Calu3 (cell line): ENCODE measurements at regions of chr1 and their contacts with region 1.

Region 1: GRCh38 chr1:225772323-225772768 is 5.3 kb upstream of the SRP9 start:
- DNase-seq: peak; percentile 98
- H3K4me3 Mint-ChIP-seq: peak overlapping the region; percentile 35
- H3K27ac Mint-ChIP-seq: peak overlapping the region; percentile 61
- H3K4me1 Mint-ChIP-seq: peaks cover 63% of the 10 kb centered on the region
- H3K27me3 Mint-ChIP-seq: no peaks in the 10 kb centered on the region
- CTCF ChIP-seq: peak; percentile 85

Region 2: GRCh38 chr1:225480825-225481434 is 291.4 kb before region 1 on chr1:
- CTCF ChIA-PET with region 1: interaction called, 12 read pairs
- intact Hi-C with region 1: loop called (anchors 1 kb)
- DNase-seq: peak; percentile 89
- H3K4me3 Mint-ChIP-seq: no peak overlapping the region
- H3K27ac Mint-ChIP-seq: no peak overlapping the region
- H3K4me1 Mint-ChIP-seq: peaks cover 15% of the 10 kb centered on the region
- H3K27me3 Mint-ChIP-seq: no peaks in the 10 kb centered on the region
- CTCF ChIP-seq: peak; percentile 96

Region 3: DNA sequence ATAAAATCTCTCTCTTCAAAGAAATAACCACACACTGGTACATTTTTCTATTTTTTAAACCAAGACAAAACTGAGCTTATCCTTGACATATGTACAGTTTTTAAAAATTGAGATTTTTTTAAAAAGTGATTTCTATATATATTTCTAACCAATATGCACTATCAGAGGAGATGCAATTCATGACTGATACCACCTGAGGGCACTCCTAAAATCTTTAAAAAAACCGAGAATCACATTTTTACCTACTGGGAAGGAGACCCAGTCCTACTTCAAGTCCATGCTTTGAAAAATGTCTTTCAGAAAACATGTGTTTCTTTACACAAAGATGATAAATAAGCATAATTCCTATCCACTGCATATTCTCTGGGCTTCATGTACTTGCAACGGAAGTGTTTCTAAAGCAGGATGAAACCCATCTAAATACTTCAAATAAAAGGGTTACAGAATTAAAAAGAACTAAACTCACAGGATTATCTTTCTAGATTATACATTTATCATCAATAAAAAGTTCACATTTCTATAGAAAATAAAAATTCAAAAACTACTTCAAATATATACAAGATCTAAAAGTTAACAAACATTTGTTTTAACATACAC is 218.0 kb before region 1 on chr1:
- CTCF ChIA-PET with region 1: interaction called, 3 read pairs
- intact Hi-C with region 1: loop called (anchors 1 kb)
- DNase-seq: peak; percentile 19
- H3K4me3 Mint-ChIP-seq: no peak overlapping the region
- H3K27ac Mint-ChIP-seq: no peak overlapping the region
- H3K4me1 Mint-ChIP-seq: peaks cover 8% of the 10 kb centered on the region
- H3K27me3 Mint-ChIP-seq: no peaks in the 10 kb centered on the region
- CTCF ChIP-seq: peak; percentile 51

Region 4: GRCh38 chr1:225652729-225653462 is 119.5 kb before region 1 on chr1 and contains the start of gene ENAH:
- CTCF ChIA-PET with region 1: interaction called, 9 read pairs
- intact Hi-C with region 1: loop called (anchors 2 kb)
- DNase-seq: peak; percentile 87
- H3K4me3 Mint-ChIP-seq: peak within 1 kb of the TSS; percentile 98
- H3K27ac Mint-ChIP-seq: peak within 1 kb of the TSS; percentile 98
- H3K4me1 Mint-ChIP-seq: peaks cover 39% of the 10 kb centered on the region
- H3K27me3 Mint-ChIP-seq: no peaks in the 10 kb centered on the region
- CTCF ChIP-seq: no peak
- total RNA-seq, gene ENAH: 92.6 and 103 TPM in 2 replicates

Region 5: DNA sequence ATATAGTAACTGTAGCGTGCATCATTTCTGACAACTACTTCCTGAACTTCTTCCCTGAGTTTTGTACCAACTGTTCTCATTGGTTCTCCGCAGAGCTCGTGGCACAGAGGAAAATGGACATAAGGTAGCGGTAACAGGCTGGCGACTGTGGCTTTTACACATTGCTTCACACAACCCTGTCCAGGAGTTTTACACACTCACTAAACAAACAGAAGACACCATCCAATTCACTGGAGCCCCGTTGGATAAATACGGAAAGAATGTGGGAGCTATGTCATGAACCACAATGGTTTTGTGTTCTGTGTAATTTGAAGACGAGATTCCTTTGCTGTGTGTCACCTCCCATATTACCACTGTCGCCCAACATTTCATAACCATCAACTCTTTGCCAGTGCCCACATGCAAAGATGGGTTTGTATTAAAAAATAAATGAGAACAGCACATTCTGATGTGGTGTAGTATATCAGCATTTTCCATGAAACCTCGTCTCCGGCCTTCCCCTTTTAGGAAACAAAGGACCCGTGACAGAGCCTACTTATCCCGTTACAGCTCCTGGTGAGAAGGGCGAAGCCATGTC is 72.1 kb before region 1 on chr1:
- CTCF ChIA-PET with region 1: interaction called, 15 read pairs
- intact Hi-C with region 1: loop called (anchors 1 kb)
- DNase-seq: peak; percentile 76
- H3K4me3 Mint-ChIP-seq: peak overlapping the region; percentile 51
- H3K27ac Mint-ChIP-seq: peak overlapping the region; percentile 85
- H3K4me1 Mint-ChIP-seq: peaks cover 22% of the 10 kb centered on the region
- H3K27me3 Mint-ChIP-seq: no peaks in the 10 kb centered on the region
- CTCF ChIP-seq: no peak

Region 6: GRCh38 chr1:225923692-225924555 is 151.6 kb after region 1 on chr1 and contains the start of gene PYCR2:
- CTCF ChIA-PET with region 1: no interaction called
- intact Hi-C with region 1: no loop called
- DNase-seq: peak; percentile 99
- H3K4me3 Mint-ChIP-seq: peak within 1 kb of the TSS; percentile 96
- H3K27ac Mint-ChIP-seq: peak within 1 kb of the TSS; percentile 93
- H3K4me1 Mint-ChIP-seq: peaks cover 8% of the 10 kb centered on the region
- H3K27me3 Mint-ChIP-seq: no peaks in the 10 kb centered on the region
- CTCF ChIP-seq: no peak
- total RNA-seq, gene PYCR2: 81.6 and 91.9 TPM in 2 replicates